ENCODE measurements at regions of chr2 and their contacts with region 1.

Region 1: GRCh38 chr2:216114714-216115557 is 5.8 kb downstream of the XRCC5 start:
- DNase-seq: peak; percentile 94
- ATAC-seq: peak; percentile 71
- H3K4me3 ChIP-seq: peak overlapping the region; percentile 93
- H3K27ac ChIP-seq: peak overlapping the region; percentile 99
- H3K4me1 ChIP-seq: peaks cover 29% of the 10 kb centered on the region
- H3K27me3 ChIP-seq: no peaks in the 10 kb centered on the region
- CTCF ChIP-seq: peak; percentile 79 to 97 (median 93)
- EP300 ChIP-seq: no peak
- POLR2A ChIP-seq: peak; percentile 67
- RAD21 ChIP-seq: no peak

Region 2: DNA sequence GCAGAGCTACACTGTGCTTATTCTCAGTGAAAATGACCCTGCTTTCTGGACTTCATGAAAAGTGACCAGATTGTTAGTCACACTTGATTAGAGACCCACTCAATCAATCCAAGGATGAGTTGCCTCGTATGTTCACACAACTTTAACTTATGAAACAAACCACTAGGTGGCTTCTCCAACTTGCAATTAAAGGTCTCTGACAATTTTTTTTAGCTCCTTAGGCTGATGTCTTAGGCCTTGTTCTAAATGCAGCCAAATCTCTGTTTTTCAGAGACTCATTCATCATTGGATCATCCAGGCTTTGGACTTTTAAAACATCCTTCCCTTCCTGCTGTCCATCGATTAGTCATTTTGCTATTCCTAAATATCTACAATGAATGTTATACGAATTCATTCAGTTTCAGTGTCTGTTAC is 164.9 kb before region 1 on chr2:
- CTCF ChIA-PET with region 1: interaction called, 5 read pairs
- POLR2A ChIA-PET with region 1: no interaction called
- RAD21 ChIA-PET with region 1: interaction called, 7 read pairs
- SMC1A ChIA-PET with region 1: interaction called, 7 read pairs
- in situ Hi-C with region 1: no loop called
- intact Hi-C with region 1: loop called (anchors 10 kb)
- DNase-seq: peak; percentile 30
- ATAC-seq: peak; percentile 97
- H3K4me3 ChIP-seq: no peak overlapping the region
- H3K27ac ChIP-seq: no peak overlapping the region
- H3K4me1 ChIP-seq: no peaks in the 10 kb centered on the region
- H3K27me3 ChIP-seq: no peaks in the 10 kb centered on the region
- CTCF ChIP-seq: peak; percentile 46 to 63 (median 62)
- EP300 ChIP-seq: no peak
- POLR2A ChIP-seq: no peak
- RAD21 ChIP-seq: peak; percentile 89

Region 3: GRCh38 chr2:215973954-215974702 is 140.8 kb before region 1 on chr2:
- CTCF ChIA-PET with region 1: no interaction called
- POLR2A ChIA-PET with region 1: no interaction called
- RAD21 ChIA-PET with region 1: no interaction called
- SMC1A ChIA-PET with region 1: no interaction called
- in situ Hi-C with region 1: no loop called
- intact Hi-C with region 1: no loop called
- DNase-seq: no peak
- ATAC-seq: no peak; the same call in 2 of the 3 replicates
- H3K4me3 ChIP-seq: no peak overlapping the region
- H3K27ac ChIP-seq: no peak overlapping the region
- H3K4me1 ChIP-seq: peaks cover 3% of the 10 kb centered on the region; the same call in 1 of the 2 replicates
- H3K27me3 ChIP-seq: no peaks in the 10 kb centered on the region
- CTCF ChIP-seq: no peak
- EP300 ChIP-seq: no peak
- POLR2A ChIP-seq: no peak
- RAD21 ChIP-seq: no peak

Region 4: DNA sequence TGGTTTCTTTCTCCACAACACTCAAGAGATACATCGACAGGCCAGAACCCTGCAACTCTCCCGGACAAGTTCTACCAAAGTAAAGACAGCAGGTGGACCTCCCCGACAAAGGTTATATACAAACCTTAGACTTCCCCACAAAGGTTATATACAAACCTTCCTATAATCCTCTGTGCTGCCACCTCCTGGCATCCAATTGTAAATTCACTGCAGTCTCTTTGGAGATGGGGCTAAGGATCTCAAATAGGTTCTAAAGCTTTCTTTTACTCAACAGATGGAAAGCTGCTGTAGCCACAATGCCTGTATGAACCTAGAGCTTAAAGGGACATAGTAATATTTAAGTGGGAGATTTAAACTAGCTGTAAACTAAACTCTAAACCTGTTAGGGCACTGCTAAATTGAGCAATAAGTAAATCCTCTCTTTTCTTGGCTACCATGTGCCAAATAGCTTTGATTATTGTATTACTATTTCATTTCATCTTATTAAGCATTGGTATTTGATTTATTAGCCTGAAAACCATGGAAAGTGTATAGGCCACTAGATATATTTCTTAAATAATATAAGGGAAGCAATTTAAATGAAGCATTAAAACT is 91.8 kb before region 1 on chr2:
- CTCF ChIA-PET with region 1: interaction called, 11 read pairs
- POLR2A ChIA-PET with region 1: interaction called, 3 read pairs
- RAD21 ChIA-PET with region 1: interaction called, 4 read pairs
- SMC1A ChIA-PET with region 1: interaction called, 7 read pairs
- in situ Hi-C with region 1: no loop called
- intact Hi-C with region 1: no loop called
- DNase-seq: no peak
- ATAC-seq: peak; percentile 97
- H3K4me3 ChIP-seq: no peak overlapping the region
- H3K27ac ChIP-seq: no peak overlapping the region
- H3K4me1 ChIP-seq: no peaks in the 10 kb centered on the region
- H3K27me3 ChIP-seq: no peaks in the 10 kb centered on the region
- CTCF ChIP-seq: peak; percentile 70 to 73 (median 71)
- EP300 ChIP-seq: no peak
- POLR2A ChIP-seq: no peak
- RAD21 ChIP-seq: peak; percentile 89

Region 5: GRCh38 chr2:216081487-216082116 is 33.3 kb before region 1 on chr2 and contains the starts of genes PECR and TMEM169:
- CTCF ChIA-PET with region 1: interaction called, 17 read pairs
- POLR2A ChIA-PET with region 1: interaction called, 42 read pairs
- RAD21 ChIA-PET with region 1: interaction called, 17 read pairs
- SMC1A ChIA-PET with region 1: interaction called, 34 read pairs
- in situ Hi-C with region 1: no loop called
- intact Hi-C with region 1: no loop called
- DNase-seq: no peak
- ATAC-seq: peak; percentile 97
- H3K4me3 ChIP-seq: peak within 1 kb of the TSS; percentile 84
- H3K27ac ChIP-seq: peak within 1 kb of the TSS; percentile 58
- H3K4me1 ChIP-seq: peaks cover 6% of the 10 kb centered on the region; the same call in 1 of the 2 replicates
- H3K27me3 ChIP-seq: no peaks in the 10 kb centered on the region
- CTCF ChIP-seq: no peak
- EP300 ChIP-seq: no peak
- POLR2A ChIP-seq: peak; percentile 94
- RAD21 ChIP-seq: no peak
- polyA plus RNA-seq, gene PECR: 7.6 to 10.4 TPM
- polyA plus RNA-seq, gene TMEM169: 0.57 to 1.2 TPM

Region 6: GRCh38 chr2:216130346-216130971 is 15.5 kb after region 1 on chr2:
- CTCF ChIA-PET with region 1: interaction called, 29 read pairs
- POLR2A ChIA-PET with region 1: interaction called, 3 read pairs
- RAD21 ChIA-PET with region 1: interaction called, 3 read pairs
- SMC1A ChIA-PET with region 1: interaction called, 4 read pairs
- in situ Hi-C with region 1: no loop called
- intact Hi-C with region 1: no loop called
- DNase-seq: no peak
- ATAC-seq: no peak
- H3K4me3 ChIP-seq: no peak overlapping the region
- H3K27ac ChIP-seq: no peak overlapping the region
- H3K4me1 ChIP-seq: no peaks in the 10 kb centered on the region
- H3K27me3 ChIP-seq: no peaks in the 10 kb centered on the region
- CTCF ChIP-seq: no peak
- EP300 ChIP-seq: no peak
- POLR2A ChIP-seq: no peak
- RAD21 ChIP-seq: no peak

Region 7: GRCh38 chr2:216206041-216206703 is 91.2 kb after region 1 on chr2:
- CTCF ChIA-PET with region 1: interaction called, 15 read pairs
- POLR2A ChIA-PET with region 1: interaction called, 9 read pairs
- RAD21 ChIA-PET with region 1: interaction called, 3 read pairs
- SMC1A ChIA-PET with region 1: interaction called, 6 read pairs
- in situ Hi-C with region 1: no loop called
- intact Hi-C with region 1: no loop called
- DNase-seq: peak; percentile 54
- ATAC-seq: peak; percentile 90
- H3K4me3 ChIP-seq: no peak overlapping the region
- H3K27ac ChIP-seq: peak overlapping the region; percentile 49
- H3K4me1 ChIP-seq: peaks cover 29% of the 10 kb centered on the region
- H3K27me3 ChIP-seq: no peaks in the 10 kb centered on the region
- CTCF ChIP-seq: no peak
- EP300 ChIP-seq: peak; percentile 64 to 91; a peak in 2 of 4 replicates
- POLR2A ChIP-seq: no peak
- RAD21 ChIP-seq: no peak

Region 8: DNA sequence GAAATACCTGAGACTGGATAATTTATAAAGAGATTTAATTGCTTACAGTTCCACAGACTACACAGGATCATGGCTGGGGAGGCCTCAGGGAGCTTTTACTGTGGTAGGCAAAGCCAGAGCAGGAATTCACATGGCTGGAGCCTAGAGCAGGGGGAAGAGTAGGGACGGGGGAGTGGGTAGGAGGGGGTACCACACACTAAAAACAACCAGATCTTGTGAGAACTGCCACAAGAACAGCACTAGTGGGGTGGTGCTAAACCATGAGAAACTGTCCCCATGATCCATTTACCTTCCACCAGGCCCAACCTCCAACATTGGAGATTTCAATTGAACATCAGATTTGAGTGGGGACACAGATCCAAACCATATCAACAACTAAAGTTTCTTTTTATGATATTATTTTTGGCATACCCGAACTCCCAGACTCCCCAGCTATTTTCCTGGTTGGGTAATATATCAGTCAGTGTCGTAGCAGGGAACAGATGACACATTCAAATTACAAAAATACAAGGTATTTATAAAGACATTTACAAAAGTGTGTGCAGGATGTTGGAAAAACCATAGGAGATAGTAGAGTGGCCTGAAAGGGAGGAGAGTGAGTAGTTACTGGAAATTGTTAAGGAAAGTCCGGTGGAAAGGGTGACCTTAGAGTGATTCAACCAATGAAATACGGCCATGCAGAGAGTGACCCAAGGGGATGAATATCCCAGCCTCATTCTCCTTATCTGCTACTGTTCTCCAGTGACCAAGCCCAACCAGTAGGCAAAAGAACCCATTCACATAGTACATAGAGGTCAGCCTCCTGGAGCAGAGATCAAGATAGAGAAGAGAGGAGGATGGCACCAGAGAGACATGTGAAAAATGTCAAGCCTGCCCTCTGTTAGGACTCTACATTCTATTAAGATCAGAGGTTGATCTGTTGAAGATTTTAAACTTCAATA is 392.6 kb after region 1 on chr2:
- CTCF ChIA-PET with region 1: interaction called, 3 read pairs
- POLR2A ChIA-PET with region 1: no interaction called
- RAD21 ChIA-PET with region 1: no interaction called
- SMC1A ChIA-PET with region 1: no interaction called
- in situ Hi-C with region 1: no loop called
- intact Hi-C with region 1: loop called (anchors 10 kb)
- DNase-seq: no peak
- ATAC-seq: peak; percentile 10
- H3K4me3 ChIP-seq: no peak overlapping the region
- H3K27ac ChIP-seq: no peak overlapping the region
- H3K4me1 ChIP-seq: peaks cover 2% of the 10 kb centered on the region; the same call in 1 of the 2 replicates
- H3K27me3 ChIP-seq: no peaks in the 10 kb centered on the region
- CTCF ChIP-seq: no peak
- EP300 ChIP-seq: no peak
- POLR2A ChIP-seq: peak; percentile 45; the same call in 1 of the 2 replicates
- RAD21 ChIP-seq: no peak

Region 9: GRCh38 chr2:216562696-216563435 is 447.9 kb after region 1 on chr2:
- CTCF ChIA-PET with region 1: no interaction called
- POLR2A ChIA-PET with region 1: no interaction called
- RAD21 ChIA-PET with region 1: no interaction called
- SMC1A ChIA-PET with region 1: no interaction called
- in situ Hi-C with region 1: no loop called
- intact Hi-C with region 1: no loop called
- DNase-seq: no peak
- ATAC-seq: no peak
- H3K4me3 ChIP-seq: no peak overlapping the region
- H3K27ac ChIP-seq: no peak overlapping the region
- H3K4me1 ChIP-seq: no peaks in the 10 kb centered on the region
- H3K27me3 ChIP-seq: no peaks in the 10 kb centered on the region
- CTCF ChIP-seq: no peak
- EP300 ChIP-seq: no peak
- POLR2A ChIP-seq: no peak
- RAD21 ChIP-seq: no peak

Measured in GM12878 (cell line).